ENCODE measurements at regions of chr1 and their contacts with region 1.

Region 1: GRCh38 chr1:199089393-199090122 is 450.7 kb downstream of the PTPRC start:
- DNase-seq: peak; percentile 81
- ATAC-seq: peak; percentile 95
- H3K4me3 ChIP-seq: peak overlapping the region in 1 of 5 experiments; percentile 18
- H3K4me3 Mint-ChIP-seq: peak overlapping the region; percentile 46
- H3K27ac ChIP-seq: peak overlapping the region; percentile 54 to 73
- H3K27ac Mint-ChIP-seq: peak overlapping the region; percentile 75
- H3K4me1 ChIP-seq: peaks cover 17 to 32% of the 10 kb centered on the region in 2 donors
- H3K4me1 Mint-ChIP-seq: peaks cover 29% of the 10 kb centered on the region
- H3K27me3 ChIP-seq: no peaks in the 10 kb centered on the region
- H3K27me3 Mint-ChIP-seq: no peaks in the 10 kb centered on the region
- CTCF ChIP-seq: no peak

Region 2: GRCh38 chr1:199046618-199047017 is 42.9 kb before region 1 on chr1:
- CTCF ChIA-PET with region 1: no interaction called
- POLR2A ChIA-PET with region 1: no interaction called
- intact Hi-C with region 1: loop called (anchors 5 kb)
- DNase-seq: no peak
- ATAC-seq: no peak
- H3K4me3 ChIP-seq: no peak overlapping the region
- H3K4me3 Mint-ChIP-seq: no peak overlapping the region
- H3K27ac ChIP-seq: no peak overlapping the region
- H3K27ac Mint-ChIP-seq: no peak overlapping the region
- H3K4me1 ChIP-seq: peaks cover 4 to 7% of the 10 kb centered on the region in 2 donors
- H3K4me1 Mint-ChIP-seq: peaks cover 9% of the 10 kb centered on the region
- H3K27me3 ChIP-seq: peaks cover 0 to 29% (median 5%) of the 10 kb centered on the region in 4 experiments
- H3K27me3 Mint-ChIP-seq: peaks cover 32% of the 10 kb centered on the region
- CTCF ChIP-seq: no peak

Region 3: DNA sequence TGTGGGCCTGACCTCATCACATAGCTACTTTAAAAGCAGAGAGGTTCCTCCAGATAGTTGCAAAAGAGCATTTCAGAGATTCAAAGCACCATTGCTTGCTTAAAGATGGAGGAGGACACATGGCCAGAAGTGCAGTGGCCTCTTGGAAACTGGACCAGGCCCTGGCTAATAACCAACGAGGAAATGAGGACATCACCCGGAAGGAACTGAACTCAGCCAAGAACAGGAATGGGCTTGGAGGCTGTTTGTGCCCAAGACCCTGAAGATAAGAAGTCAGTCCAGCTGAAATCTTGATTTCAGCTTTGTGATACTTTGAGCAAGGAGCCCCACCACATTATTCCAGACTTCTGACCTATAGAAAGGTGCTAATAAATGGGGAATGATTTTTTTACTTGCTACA is 13.8 kb before region 1 on chr1:
- CTCF ChIA-PET with region 1: no interaction called
- POLR2A ChIA-PET with region 1: no interaction called
- intact Hi-C with region 1: no loop called
- DNase-seq: no peak
- ATAC-seq: no peak
- H3K4me3 ChIP-seq: no peak overlapping the region
- H3K4me3 Mint-ChIP-seq: no peak overlapping the region
- H3K27ac ChIP-seq: no peak overlapping the region
- H3K27ac Mint-ChIP-seq: no peak overlapping the region
- H3K4me1 ChIP-seq: no peaks in the 10 kb centered on the region
- H3K4me1 Mint-ChIP-seq: no peaks in the 10 kb centered on the region
- H3K27me3 ChIP-seq: no peaks in the 10 kb centered on the region
- H3K27me3 Mint-ChIP-seq: peaks cover 4% of the 10 kb centered on the region
- CTCF ChIP-seq: no peak

Measured in B cell (primary cell).